ENCODE measurements at regions of chr5 and their contacts with region 1.

Region 1: GRCh38 chr5:138918686-138919085 is 43.6 kb upstream of the LRRTM2 start:
- DNase-seq: no peak
- H3K4me3 ChIP-seq: no peak overlapping the region
- H3K27ac ChIP-seq: no peak overlapping the region
- H3K4me1 ChIP-seq: peaks cover 0 to 20% of the 10 kb centered on the region in 2 donors
- H3K27me3 ChIP-seq: no peaks in the 10 kb centered on the region
- CTCF ChIP-seq: no peak

Region 2: GRCh38 chr5:138668376-138669079 is 250.2 kb before region 1 on chr5:
- intact Hi-C with region 1: no loop called
- DNase-seq: no peak
- H3K4me3 ChIP-seq: no peak overlapping the region
- H3K27ac ChIP-seq: no peak overlapping the region
- H3K4me1 ChIP-seq: no peaks in the 10 kb centered on the region
- H3K27me3 ChIP-seq: no peaks in the 10 kb centered on the region
- CTCF ChIP-seq: no peak

Region 3: DNA sequence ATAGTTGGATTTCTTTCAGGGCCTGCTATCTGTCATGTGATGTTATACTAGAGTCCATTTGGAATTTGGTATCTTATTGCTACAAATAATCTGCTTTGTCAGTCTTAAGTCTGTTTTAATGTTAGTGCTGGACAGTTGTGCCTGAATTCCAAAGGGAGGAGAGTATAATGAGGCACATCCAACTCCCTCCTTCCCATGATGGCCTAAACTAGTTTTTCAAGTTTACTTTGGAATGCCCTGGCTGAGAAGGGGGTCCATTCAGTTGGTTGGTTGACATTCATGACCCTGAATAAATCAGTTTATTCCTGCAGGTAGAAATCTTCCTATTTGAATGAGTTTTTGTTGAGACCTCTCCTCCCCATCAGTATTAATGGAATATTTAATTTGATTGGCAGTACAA is 34.1 kb before region 1 on chr5:
- intact Hi-C with region 1: no loop called
- DNase-seq: no peak
- H3K4me3 ChIP-seq: no peak overlapping the region
- H3K27ac ChIP-seq: no peak overlapping the region
- H3K4me1 ChIP-seq: peaks cover 0 to 5% of the 10 kb centered on the region in 2 donors
- H3K27me3 ChIP-seq: no peaks in the 10 kb centered on the region
- CTCF ChIP-seq: no peak

Region 4: DNA sequence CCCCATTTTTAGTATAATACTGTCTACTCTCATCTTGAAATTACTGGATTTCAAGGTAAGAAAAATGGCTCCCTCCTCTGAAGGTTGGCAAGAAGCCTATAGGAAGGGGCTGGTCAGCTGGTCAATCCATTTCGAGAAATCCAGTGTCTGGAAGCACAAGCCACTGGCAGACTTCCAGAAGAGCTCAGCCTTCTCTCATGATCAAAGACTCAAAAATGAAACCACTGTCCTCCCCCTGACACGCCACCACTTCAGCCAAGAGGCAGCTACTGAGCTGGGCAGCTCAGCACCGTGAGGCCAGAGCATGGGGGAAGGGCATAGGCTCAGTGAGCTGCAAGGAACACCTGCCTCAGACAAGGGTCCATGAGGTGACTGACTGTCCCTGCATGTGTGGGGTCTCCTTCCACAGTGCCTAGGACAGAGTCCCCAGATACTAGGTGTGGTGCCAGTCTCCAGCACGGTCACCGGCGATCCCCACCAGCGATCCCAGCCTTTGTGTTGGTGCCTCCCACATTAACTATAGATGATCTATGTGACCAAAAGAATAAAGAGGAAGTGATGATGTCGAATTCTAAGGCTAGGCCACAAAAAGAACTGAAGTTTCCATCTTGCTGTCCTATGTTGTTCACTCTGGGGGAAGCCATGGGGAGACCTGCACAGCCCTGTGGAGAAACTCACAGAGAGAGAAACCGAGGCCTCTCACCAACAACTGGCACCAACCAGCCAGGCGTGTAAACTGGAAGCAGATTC is 56.6 kb after region 1 on chr5:
- intact Hi-C with region 1: loop called (anchors 5 kb)
- DNase-seq: peak in 1 of 2 donors; percentile 73
- H3K4me3 ChIP-seq: no peak overlapping the region
- H3K27ac ChIP-seq: peak overlapping the region; percentile 82 to 88
- H3K4me1 ChIP-seq: peaks cover 11 to 47% of the 10 kb centered on the region in 2 donors
- H3K27me3 ChIP-seq: no peaks in the 10 kb centered on the region
- CTCF ChIP-seq: no peak

Measured in ascending aorta (tissue), 2 donors.